GM12878 (cell line): ENCODE measurements at regions of chr9 and their contacts with region 1.

Region 1: DNA sequence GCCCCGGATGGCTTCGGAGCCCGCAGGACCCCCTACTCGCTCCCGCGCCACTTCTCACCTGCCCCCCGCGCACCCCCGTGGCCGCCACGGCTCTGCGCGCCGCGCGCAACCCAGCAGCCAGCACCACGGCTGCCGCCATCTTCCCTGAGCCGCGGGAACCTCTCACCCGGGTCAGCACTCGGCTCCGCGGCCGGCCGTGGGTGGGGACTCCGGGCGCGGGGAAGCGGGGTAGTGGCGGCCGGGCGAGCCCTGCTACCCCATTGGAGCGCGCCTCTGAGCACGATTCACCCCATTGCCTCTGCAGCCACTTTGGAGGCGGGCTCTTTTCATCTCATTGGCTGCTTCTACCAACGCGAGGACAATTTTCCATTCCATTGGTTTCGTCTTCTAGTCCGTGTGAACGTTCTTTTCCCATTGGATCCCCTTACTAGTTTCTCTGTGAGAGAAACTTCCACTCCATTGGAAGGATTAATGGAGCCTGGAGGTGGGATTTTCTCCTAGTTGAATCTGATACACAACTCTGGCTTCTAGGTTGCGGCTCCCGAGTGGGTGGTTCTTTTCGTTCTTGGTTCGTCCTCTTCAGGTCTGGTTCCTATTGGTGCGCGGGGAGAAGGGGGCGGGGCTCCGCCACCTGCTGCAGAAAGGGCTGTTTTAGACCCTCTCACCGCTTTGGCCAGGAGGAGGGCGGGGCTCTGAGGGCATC is at the start of gene HINT2:
- DNase-seq: peak; percentile 95
- ATAC-seq: peak; percentile 92
- H3K4me3 ChIP-seq: peak within 1 kb of the TSS; percentile 79
- H3K27ac ChIP-seq: peak within 1 kb of the TSS; percentile 75
- H3K4me1 ChIP-seq: peaks cover 33% of the 10 kb centered on the region
- H3K27me3 ChIP-seq: no peaks in the 10 kb centered on the region; a peak in 1 of 4 replicates
- CTCF ChIP-seq: no peak
- EP300 ChIP-seq: no peak
- POLR2A ChIP-seq: peak; percentile 95
- RAD21 ChIP-seq: no peak
- polyA plus RNA-seq, gene HINT2: 12.1 to 32.0 TPM

Region 2: DNA sequence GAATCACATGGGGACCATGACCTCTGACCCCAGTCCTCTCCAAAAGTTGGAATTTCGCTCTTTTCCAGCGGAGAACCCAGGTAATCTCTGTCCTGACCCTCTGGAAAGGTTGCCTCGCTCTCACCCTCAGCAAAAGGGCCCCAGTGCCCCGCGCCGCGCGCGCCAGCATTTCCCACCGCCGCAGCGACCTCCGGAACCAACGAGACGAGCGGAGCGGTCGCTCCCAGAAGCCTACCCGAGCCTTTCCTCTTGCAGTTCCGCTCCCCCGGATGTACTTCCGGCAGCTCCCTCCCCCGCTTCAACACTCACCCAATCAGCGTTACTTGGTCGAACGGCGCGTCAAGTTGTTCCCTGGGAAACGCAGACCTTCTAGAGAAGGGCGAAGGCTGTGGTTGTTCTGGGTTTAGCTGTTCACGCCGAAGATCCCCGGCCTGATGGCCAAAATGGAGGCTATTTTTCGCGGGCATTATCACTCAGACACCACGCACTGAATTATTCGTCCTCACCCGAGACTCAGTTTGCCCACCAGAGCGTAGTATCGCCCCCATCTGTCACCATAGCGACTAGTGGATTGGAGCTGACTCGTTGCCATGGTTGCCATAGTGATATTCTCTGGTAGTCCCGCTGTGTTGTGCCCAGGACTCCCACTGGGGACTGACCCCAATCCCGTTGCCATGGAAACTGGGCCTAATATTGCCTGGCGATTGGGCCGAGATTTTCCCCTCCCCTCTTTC is 711.9 kb before region 1 on chr9 and contains the start of gene STOML2:
- CTCF ChIA-PET with region 1: no interaction called
- POLR2A ChIA-PET with region 1: no interaction called
- RAD21 ChIA-PET with region 1: no interaction called
- SMC1A ChIA-PET with region 1: no interaction called
- in situ Hi-C with region 1: loop called (anchors 10 kb)
- intact Hi-C with region 1: no loop called
- DNase-seq: peak; percentile 78
- ATAC-seq: peak; percentile 99
- H3K4me3 ChIP-seq: peak within 1 kb of the TSS; percentile 79
- H3K27ac ChIP-seq: peak within 1 kb of the TSS; percentile 88
- H3K4me1 ChIP-seq: peaks cover 5% of the 10 kb centered on the region
- H3K27me3 ChIP-seq: no peaks in the 10 kb centered on the region
- CTCF ChIP-seq: no peak
- EP300 ChIP-seq: peak in 1 of 2 experiments; percentile 73; a peak in 2 of 4 replicates
- POLR2A ChIP-seq: peak; percentile 88
- RAD21 ChIP-seq: no peak
- polyA plus RNA-seq, gene STOML2: 112 to 148 TPM

Region 3: GRCh38 chr9:35603987-35604577 is 210.9 kb before region 1 on chr9:
- CTCF ChIA-PET with region 1: interaction called, 3 read pairs
- POLR2A ChIA-PET with region 1: no interaction called
- RAD21 ChIA-PET with region 1: no interaction called
- SMC1A ChIA-PET with region 1: interaction called, 4 read pairs
- in situ Hi-C with region 1: no loop called
- intact Hi-C with region 1: loop called (anchors 10 kb)
- DNase-seq: peak; percentile 98
- ATAC-seq: peak; percentile 97
- H3K4me3 ChIP-seq: peak overlapping the region; percentile 77
- H3K27ac ChIP-seq: peak overlapping the region; percentile 73
- H3K4me1 ChIP-seq: peaks cover 8% of the 10 kb centered on the region
- H3K27me3 ChIP-seq: no peaks in the 10 kb centered on the region
- CTCF ChIP-seq: peak; percentile 81 to 98 (median 90)
- EP300 ChIP-seq: no peak
- POLR2A ChIP-seq: peak; percentile 81
- RAD21 ChIP-seq: peak; percentile 76

Region 4: DNA sequence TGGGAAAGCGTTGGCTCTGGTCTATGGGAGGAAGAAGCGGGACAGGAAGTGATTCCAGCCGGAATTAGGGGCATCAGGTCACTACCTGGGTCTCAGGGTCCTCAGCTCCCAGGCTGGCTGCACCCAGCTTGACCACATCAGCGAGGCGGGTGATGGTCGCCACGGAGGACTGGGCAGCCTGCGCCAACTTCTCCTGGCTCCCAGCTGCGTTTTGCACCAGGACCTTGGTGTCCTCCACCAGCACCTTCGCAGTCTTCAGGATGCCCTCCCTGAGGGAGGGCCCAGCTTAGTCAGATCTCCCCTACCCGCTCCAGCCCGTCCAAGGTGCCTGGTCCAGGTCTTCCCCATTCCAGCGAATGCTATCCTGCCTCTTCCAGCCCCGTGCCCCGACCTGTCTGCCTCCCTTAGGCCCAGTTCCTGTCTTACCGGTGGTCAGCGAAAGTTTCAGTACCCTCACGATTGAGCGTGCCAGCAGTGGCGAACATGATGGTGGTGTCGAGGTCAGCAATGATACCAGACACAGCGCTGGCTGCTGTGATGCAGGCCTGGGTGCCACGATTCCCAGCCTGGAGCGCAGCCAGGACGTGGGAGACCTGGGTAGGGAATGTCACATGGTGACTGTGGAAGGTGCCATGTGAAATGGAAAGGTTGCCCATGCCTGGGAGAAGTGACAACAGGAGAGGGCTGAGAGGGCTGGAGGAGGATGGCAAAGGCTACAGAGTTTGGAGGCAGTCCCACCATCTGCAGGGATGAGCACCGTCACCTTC is 110.9 kb before region 1 on chr9:
- CTCF ChIA-PET with region 1: no interaction called
- POLR2A ChIA-PET with region 1: no interaction called
- RAD21 ChIA-PET with region 1: no interaction called
- SMC1A ChIA-PET with region 1: no interaction called
- in situ Hi-C with region 1: no loop called
- intact Hi-C with region 1: no loop called
- DNase-seq: no peak
- ATAC-seq: no peak
- H3K4me3 ChIP-seq: no peak overlapping the region
- H3K27ac ChIP-seq: no peak overlapping the region
- H3K4me1 ChIP-seq: no peaks in the 10 kb centered on the region
- H3K27me3 ChIP-seq: no peaks in the 10 kb centered on the region
- CTCF ChIP-seq: no peak
- EP300 ChIP-seq: no peak
- POLR2A ChIP-seq: no peak
- RAD21 ChIP-seq: no peak

Region 5: GRCh38 chr9:35790385-35791296 is 24.4 kb before region 1 on chr9:
- CTCF ChIA-PET with region 1: interaction called, 32 read pairs
- POLR2A ChIA-PET with region 1: no interaction called
- RAD21 ChIA-PET with region 1: interaction called, 7 read pairs
- SMC1A ChIA-PET with region 1: interaction called, 10 read pairs
- in situ Hi-C with region 1: no loop called
- intact Hi-C with region 1: loop called (anchors 2 kb)
- DNase-seq: no peak
- ATAC-seq: peak; percentile 98
- H3K4me3 ChIP-seq: no peak overlapping the region
- H3K27ac ChIP-seq: no peak overlapping the region
- H3K4me1 ChIP-seq: no peaks in the 10 kb centered on the region
- H3K27me3 ChIP-seq: no peaks in the 10 kb centered on the region
- CTCF ChIP-seq: peak; percentile 84 to 94 (median 91)
- EP300 ChIP-seq: no peak
- POLR2A ChIP-seq: no peak
- RAD21 ChIP-seq: peak; percentile 83

Region 6: DNA sequence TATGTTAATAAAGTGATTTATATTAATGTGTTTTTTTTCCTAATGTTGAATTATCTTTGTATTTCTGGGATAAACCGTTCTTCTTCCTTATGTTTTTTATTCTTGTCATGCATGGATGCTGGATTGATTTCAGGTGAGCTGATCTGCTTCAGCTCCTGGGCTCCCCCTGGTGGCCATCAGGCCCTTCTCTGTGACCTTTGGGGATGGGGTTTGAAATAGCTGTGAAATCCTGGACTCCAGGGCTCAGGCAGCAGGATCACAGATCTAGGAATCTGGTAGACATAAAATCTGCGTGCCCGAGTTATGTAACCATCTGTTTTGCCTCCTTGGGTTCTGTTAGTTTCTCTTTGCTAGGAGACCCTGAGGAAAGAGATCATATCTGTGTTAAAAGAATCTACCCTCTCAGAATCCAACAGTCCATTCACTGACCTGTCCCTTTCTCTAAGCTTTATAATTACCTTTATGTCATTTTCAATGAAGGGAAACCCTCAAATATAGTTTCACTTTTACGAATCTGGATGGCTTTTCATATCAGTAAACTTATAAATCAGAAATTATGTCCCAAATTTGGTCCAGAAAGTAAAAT is 67.4 kb after region 1 on chr9:
- CTCF ChIA-PET with region 1: interaction called, 28 read pairs
- POLR2A ChIA-PET with region 1: no interaction called
- RAD21 ChIA-PET with region 1: interaction called, 9 read pairs
- SMC1A ChIA-PET with region 1: interaction called, 14 read pairs
- in situ Hi-C with region 1: no loop called
- intact Hi-C with region 1: no loop called
- DNase-seq: peak; percentile 20
- ATAC-seq: peak; percentile 83
- H3K4me3 ChIP-seq: no peak overlapping the region
- H3K27ac ChIP-seq: no peak overlapping the region
- H3K4me1 ChIP-seq: no peaks in the 10 kb centered on the region
- H3K27me3 ChIP-seq: no peaks in the 10 kb centered on the region
- CTCF ChIP-seq: peak; percentile 93 to 96 (median 93)
- EP300 ChIP-seq: no peak
- POLR2A ChIP-seq: no peak
- RAD21 ChIP-seq: peak; percentile 97